Heart right ventricle (tissue), 16 donors: ENCODE measurements at regions of chr1 and their contacts with region 1.

Region 1: DNA sequence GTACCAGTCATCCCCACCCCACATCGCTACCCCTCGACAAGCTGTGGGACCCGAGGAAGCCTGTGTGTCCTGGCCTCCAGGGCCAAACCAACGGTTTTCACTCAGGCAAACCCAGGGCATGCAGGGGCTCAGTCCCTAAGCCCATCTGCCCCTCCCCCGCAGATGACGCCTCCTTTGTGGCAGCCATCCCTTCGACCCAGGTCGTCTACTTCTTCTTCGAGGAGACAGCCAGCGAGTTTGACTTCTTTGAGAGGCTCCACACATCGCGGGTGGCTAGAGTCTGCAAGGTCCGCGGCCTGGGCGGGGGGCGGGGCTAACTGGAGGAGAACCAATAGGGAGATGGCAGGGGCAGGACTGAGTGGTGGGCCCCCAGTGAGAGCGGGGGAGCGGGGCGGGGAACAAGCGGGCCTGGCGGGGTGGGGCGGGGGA is 7.4 kb downstream of the SEMA4A start:
- DNase-seq: peak; percentile 88 to 93
- ATAC-seq: peak; percentile 88 to 96 (median 90)
- H3K4me3 ChIP-seq: peak overlapping the region in 9 of 10 donors; percentile 40 to 68 (median 56)
- H3K27ac ChIP-seq: peak overlapping the region; percentile 71 to 93 (median 88)
- H3K4me1 ChIP-seq: peaks cover 3 to 62% (median 32%) of the 10 kb centered on the region in 9 donors
- H3K27me3 ChIP-seq: no peaks in the 10 kb centered on the region
- CTCF ChIP-seq: no peak

Region 2: GRCh38 chr1:156193488-156194299 is 32.9 kb after region 1 on chr1 and contains the start of gene SLC25A44:
- intact Hi-C with region 1: loop called in 2 of 10 experiments (anchors 5 kb)
- DNase-seq: peak; percentile 93 to 97
- ATAC-seq: peak; percentile 98 to 100 (median 100)
- H3K4me3 ChIP-seq: peak within 1 kb of the TSS; percentile 69 to 98 (median 89)
- H3K27ac ChIP-seq: peak within 1 kb of the TSS; percentile 62 to 93 (median 86)
- H3K4me1 ChIP-seq: peaks cover 0 to 47% (median 40%) of the 10 kb centered on the region in 9 donors
- H3K27me3 ChIP-seq: no peaks in the 10 kb centered on the region
- CTCF ChIP-seq: peak; percentile 22 to 80 (median 72)
- total RNA-seq, gene SLC25A44: 15.4 to 26.0 (median 20.1) TPM

Region 3: GRCh38 chr1:156198831-156199349 is 38.1 kb after region 1 on chr1:
- intact Hi-C with region 1: loop called in 2 of 10 experiments (anchors 5 kb)
- DNase-seq: no peak
- ATAC-seq: no peak
- H3K4me3 ChIP-seq: no peak overlapping the region
- H3K27ac ChIP-seq: peak overlapping the region in 1 of 10 donors; percentile 12
- H3K4me1 ChIP-seq: peaks cover 0 to 70% (median 56%) of the 10 kb centered on the region in 9 donors
- H3K27me3 ChIP-seq: no peaks in the 10 kb centered on the region
- CTCF ChIP-seq: no peak

Region 4: DNA sequence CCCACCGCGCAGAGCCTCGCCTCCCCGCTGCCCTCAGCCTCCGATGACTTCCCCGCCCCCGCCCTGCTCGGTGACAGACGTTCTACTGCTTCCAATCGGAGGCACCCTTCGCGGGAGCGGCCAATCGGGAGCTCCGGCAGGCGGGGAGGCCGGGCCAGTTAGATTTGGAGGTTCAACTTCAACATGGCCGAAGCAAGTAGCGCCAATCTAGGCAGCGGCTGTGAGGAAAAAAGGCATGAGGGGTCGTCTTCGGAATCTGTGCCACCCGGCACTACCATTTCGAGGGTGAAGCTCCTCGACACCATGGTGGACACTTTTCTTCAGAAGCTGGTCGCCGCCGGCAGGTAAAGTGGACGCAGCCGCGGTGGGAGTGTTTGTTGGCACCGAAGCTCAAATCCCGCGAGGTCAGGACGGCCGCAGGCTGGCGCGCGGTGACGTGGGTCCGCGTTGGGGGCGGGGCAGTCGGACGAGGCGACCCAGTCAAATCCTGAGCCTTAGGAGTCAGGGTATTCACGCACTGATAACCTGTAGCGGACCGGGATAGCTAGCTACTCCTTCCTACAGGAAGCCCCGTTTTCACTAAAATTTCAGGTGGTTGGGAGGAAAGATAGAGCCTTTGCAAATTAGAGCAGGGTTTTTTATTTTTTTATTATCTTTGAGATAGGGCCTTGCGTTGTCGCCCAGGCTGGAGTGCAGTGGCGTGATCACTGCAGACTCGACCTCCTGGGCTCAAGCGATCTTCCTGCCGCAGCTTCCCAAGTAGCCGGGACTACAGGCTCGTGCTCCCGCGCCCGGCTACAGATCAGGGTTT is 52.3 kb after region 1 on chr1 and contains the start of gene PMF1:
- intact Hi-C with region 1: loop called in 2 of 10 experiments (anchors 5 kb)
- DNase-seq: peak; percentile 96 to 98
- ATAC-seq: peak; percentile 97 to 99 (median 99)
- H3K4me3 ChIP-seq: peak within 1 kb of the TSS; percentile 51 to 84 (median 66)
- H3K27ac ChIP-seq: peak within 1 kb of the TSS; percentile 85 to 99 (median 96)
- H3K4me1 ChIP-seq: peaks cover 3 to 44% (median 27%) of the 10 kb centered on the region in 9 donors
- H3K27me3 ChIP-seq: no peaks in the 10 kb centered on the region
- CTCF ChIP-seq: no peak
- total RNA-seq, gene PMF1: 55.9 to 87.3 (median 66.4) TPM

Region 5: DNA sequence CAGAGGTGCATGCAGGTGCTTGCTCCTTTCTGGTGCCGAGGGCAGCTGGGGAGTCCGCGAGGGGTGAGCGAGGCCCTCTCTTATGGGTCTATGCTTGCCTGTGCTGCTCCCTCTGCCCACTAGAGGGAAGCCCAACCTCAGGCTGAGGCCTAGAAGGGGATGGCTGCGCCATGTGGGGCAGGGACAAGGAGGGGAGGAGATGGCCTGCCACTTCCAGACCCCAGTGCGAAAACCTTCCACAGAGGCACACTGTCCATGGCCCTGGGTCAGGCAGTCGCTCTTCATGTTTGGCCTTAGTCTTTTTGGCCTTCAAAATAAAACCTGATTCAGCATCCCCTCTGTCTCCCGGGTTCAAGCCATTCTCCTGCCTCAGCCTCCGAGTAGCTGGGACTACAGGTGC is 222.3 kb after region 1 on chr1:
- intact Hi-C with region 1: no loop called
- DNase-seq: peak; percentile 51 to 55
- ATAC-seq: peak; percentile 71 to 93 (median 80)
- H3K4me3 ChIP-seq: no peak overlapping the region
- H3K27ac ChIP-seq: no peak overlapping the region
- H3K4me1 ChIP-seq: peaks cover 0 to 4% (median 0%) of the 10 kb centered on the region in 9 donors
- H3K27me3 ChIP-seq: peaks cover 0 to 24% (median 22%) of the 10 kb centered on the region in 7 donors
- CTCF ChIP-seq: peak; percentile 52 to 83 (median 77)